HEK293 (cell line): ENCODE measurements at regions of chr9 and their contacts with region 1.

Region 1: DNA sequence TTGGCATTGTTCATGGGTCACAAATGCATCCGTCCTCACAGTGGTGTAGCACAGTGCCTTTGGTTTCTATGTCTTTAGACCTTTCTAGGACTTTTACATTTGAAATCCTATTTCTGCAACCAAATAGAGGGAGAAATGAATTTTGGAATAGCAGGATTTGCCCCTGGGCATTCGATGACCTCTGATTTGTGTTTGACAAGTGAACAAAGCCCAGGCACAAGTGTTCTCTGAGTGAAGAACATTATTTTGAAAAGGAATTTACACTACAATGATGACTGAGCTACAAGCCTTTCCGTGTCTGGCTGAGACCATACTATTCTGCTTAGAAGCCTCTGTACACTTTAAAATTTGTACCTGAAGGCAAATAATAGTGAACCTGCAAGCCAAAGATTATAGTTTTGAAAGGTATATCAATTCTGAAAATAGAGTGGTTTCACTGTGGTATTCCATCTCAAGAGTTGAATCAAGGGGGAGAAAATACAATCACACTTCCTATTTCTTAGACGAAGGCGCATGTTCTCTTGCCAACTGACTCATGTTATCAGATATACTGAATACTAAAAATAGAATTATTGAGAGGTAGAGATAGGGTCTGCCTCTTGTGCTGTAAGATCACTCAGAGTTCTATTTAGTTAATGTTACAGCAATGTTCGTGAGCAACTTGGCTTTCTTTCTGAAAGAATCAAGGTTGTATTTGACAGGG is 297.6 kb downstream of the KDM4C start:
- H3K4me3 ChIP-seq: no peak overlapping the region
- H3K27ac ChIP-seq: no peak overlapping the region
- H3K4me1 ChIP-seq: no peaks in the 10 kb centered on the region
- CTCF ChIP-seq: no peak

Region 2: DNA sequence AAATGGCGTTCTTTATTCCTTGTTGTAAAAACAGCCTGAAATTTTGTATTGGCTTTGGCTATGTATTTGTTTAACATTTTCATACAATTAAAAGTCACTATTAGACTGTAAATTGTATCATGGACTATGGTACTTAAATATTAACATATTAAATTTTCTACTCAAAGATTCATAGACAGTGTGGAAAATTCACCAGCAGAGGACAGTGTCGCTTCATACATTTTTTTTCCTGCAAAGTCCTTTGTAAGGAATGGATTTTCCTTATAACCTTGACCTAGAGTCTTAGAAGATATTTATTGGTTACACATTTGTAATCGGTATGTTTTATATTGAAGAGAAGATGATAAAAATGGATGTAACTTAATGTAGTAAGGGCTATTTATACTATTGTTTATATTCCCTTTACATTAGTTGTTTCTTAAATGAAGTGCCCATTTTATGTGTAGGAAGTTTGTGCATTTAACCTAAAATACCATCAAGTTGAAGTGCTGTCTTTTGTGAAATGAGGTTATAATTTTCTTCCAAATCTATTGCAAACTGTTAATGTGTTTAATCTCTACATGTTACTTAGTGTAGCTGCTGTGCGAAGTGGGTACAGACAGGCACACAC is 147.5 kb before region 1 on chr9:
- CTCF ChIA-PET with region 1: interaction called, 12 read pairs
- POLR2A ChIA-PET with region 1: no interaction called
- H3K4me3 ChIP-seq: no peak overlapping the region
- H3K27ac ChIP-seq: no peak overlapping the region
- H3K4me1 ChIP-seq: no peaks in the 10 kb centered on the region
- CTCF ChIP-seq: 0 out of 2 replicates have a peak, but pooled peaks have one; percentile 18

Region 3: DNA sequence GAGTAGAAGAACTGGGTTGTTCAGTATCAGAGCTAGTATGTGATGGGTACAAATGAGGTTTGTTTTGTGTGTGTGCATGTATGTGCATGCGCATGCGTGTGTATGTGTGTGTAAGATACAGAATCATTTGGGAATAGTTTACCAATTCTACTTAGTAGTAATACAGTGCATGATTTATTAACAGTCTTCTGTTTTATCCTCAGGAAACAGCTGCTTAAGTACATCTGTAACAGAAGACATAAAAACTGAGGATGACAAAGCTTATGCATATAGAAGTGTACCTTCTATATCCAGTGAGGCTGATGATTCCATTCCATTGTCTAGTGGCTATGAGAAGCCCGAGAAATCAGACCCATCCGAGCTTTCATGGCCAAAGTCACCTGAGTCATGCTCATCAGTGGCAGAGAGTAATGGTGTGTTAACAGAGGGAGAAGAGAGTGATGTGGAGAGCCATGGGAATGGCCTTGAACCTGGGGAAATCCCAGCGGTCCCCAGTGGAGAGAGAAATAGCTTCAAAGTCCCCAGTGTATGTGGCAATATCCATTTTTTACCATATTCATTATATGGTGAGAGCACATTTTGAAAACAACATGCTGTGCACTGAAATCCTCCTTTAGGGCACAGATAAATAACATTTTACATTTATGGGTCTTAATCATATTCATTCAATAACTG is 69.1 kb before region 1 on chr9:
- CTCF ChIA-PET with region 1: no interaction called
- POLR2A ChIA-PET with region 1: no interaction called
- H3K4me3 ChIP-seq: no peak overlapping the region
- H3K27ac ChIP-seq: no peak overlapping the region
- H3K4me1 ChIP-seq: no peaks in the 10 kb centered on the region
- CTCF ChIP-seq: no peak

Region 4: DNA sequence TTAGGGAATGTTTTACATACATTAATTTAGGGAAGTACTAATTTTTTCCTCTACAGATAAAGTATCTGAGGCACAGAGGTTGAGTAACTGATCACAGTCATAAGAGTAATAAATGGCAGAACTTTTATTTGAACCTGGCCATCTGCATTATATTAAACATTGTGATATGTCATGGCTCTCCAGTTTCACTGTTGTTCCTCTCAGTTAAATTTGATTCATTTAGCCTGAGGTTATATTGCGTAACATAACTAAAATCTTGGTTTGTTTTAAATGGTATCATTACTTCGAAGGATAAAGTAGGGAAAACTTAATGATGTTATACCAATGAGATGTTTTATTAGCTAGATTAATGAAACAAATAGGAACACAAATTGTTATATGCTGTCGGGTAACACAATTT is 13.2 kb before region 1 on chr9:
- CTCF ChIA-PET with region 1: interaction called, 12 read pairs
- POLR2A ChIA-PET with region 1: no interaction called
- H3K4me3 ChIP-seq: no peak overlapping the region
- H3K27ac ChIP-seq: no peak overlapping the region
- H3K4me1 ChIP-seq: no peaks in the 10 kb centered on the region; the same call in 1 of the 2 replicates
- CTCF ChIP-seq: no peak

Region 5: DNA sequence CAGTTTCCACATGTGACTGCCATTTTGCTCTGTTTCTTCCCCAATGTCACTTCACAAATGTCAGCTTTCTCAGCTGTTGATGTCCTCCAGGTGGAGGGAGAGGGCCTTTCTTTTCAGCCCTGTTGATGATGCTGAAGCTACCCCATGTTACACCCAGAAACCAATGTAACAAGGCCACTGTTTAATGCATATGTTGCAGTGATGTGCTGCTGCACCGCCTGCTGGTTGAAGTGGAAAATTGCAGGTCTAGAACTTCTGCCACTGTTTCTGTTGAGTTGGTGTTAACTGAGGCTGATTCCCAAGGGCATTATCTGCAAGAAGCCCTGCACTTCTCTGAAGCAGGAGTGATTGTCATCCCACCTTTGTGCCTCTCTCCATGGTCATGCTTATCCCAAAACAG is 130.8 kb after region 1 on chr9:
- CTCF ChIA-PET with region 1: interaction called, 10 read pairs
- POLR2A ChIA-PET with region 1: no interaction called
- H3K4me3 ChIP-seq: no peak overlapping the region
- H3K27ac ChIP-seq: no peak overlapping the region
- H3K4me1 ChIP-seq: no peaks in the 10 kb centered on the region
- CTCF ChIP-seq: no peak

Region 6: GRCh38 chr9:7234143-7234542 is 178.8 kb after region 1 on chr9:
- CTCF ChIA-PET with region 1: interaction called, 15 read pairs
- POLR2A ChIA-PET with region 1: no interaction called
- H3K4me3 ChIP-seq: no peak overlapping the region
- H3K27ac ChIP-seq: no peak overlapping the region
- H3K4me1 ChIP-seq: 0 out of 2 replicates have a peak, but pooled peaks cover 4% of the 10 kb centered on the region
- CTCF ChIP-seq: no peak

Region 7: GRCh38 chr9:7534211-7534935 is 479.0 kb after region 1 on chr9:
- CTCF ChIA-PET with region 1: interaction called, 16 read pairs
- POLR2A ChIA-PET with region 1: no interaction called
- H3K4me3 ChIP-seq: no peak overlapping the region
- H3K27ac ChIP-seq: no peak overlapping the region
- H3K4me1 ChIP-seq: no peaks in the 10 kb centered on the region
- CTCF ChIP-seq: no peak

Region 8: GRCh38 chr9:7570107-7570720 is 514.9 kb after region 1 on chr9:
- CTCF ChIA-PET with region 1: no interaction called
- POLR2A ChIA-PET with region 1: no interaction called
- H3K4me3 ChIP-seq: no peak overlapping the region
- H3K27ac ChIP-seq: no peak overlapping the region
- H3K4me1 ChIP-seq: no peaks in the 10 kb centered on the region
- CTCF ChIP-seq: no peak